T-cell (primary cell): ENCODE measurements at regions of chr7 and their contacts with region 1.

Region 1: GRCh38 chr7:152383341-152384234 is 52.2 kb downstream of the KMT2C start:
- DNase-seq: no peak
- ATAC-seq: peak in 1 of 4 experiments; percentile 15
- H3K4me3 ChIP-seq: no peak overlapping the region
- H3K4me3 Mint-ChIP-seq: no peak overlapping the region
- H3K27ac ChIP-seq: no peak overlapping the region
- H3K27ac Mint-ChIP-seq: no peak overlapping the region
- H3K4me1 ChIP-seq: peaks cover 2% of the 10 kb centered on the region in 2 experiments
- H3K4me1 Mint-ChIP-seq: peaks cover 35 to 42% (median 38%) of the 10 kb centered on the region in 3 donors
- H3K27me3 ChIP-seq: no peaks in the 10 kb centered on the region
- H3K27me3 Mint-ChIP-seq: no peaks in the 10 kb centered on the region

Region 2: DNA sequence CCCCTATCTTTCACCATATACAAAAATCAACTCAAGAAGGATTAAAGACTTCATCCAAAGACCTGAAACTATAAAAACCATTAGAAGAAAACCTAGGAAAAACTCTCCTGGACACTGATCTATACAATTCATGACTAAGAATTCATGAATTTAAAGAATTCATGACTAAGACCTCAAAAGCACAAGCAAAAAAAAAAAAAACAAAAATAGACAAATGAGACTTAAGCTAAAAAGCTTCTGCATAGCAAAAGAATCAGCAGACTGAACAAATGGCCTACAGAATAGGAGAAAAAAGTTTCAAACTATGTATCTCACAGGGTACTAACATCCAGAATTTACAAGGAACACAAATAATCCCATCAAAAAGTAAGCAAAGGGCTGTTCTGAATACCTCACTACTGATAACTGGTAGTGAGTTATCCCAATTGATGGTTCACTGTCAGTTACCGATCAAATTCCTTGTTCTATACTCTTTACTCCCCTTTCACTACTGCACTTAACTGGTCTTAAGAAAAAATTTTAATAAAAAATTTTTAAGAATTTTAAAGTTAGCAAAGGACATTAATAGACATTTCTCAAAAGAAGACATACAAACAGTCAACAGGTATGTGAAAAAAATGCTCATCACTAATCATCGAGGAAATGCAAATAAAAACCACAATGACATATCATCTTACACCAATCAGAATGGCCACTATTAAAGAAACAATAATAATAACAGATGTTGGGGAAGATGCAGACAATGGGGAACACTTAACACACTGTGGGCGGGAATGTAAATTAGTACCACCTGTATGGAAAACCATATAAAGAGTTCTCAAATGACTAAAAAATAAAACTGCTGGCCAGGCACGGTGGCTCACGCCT is 19.0 kb after region 1 on chr7:
- CTCF ChIA-PET with region 1: no interaction called
- POLR2A ChIA-PET with region 1: no interaction called
- DNase-seq: no peak
- ATAC-seq: no peak
- H3K4me3 ChIP-seq: no peak overlapping the region
- H3K4me3 Mint-ChIP-seq: no peak overlapping the region
- H3K27ac ChIP-seq: no peak overlapping the region
- H3K27ac Mint-ChIP-seq: no peak overlapping the region
- H3K4me1 ChIP-seq: peaks cover 0 to 9% of the 10 kb centered on the region in 2 experiments
- H3K4me1 Mint-ChIP-seq: peaks cover 23 to 41% (median 40%) of the 10 kb centered on the region in 3 donors
- H3K27me3 ChIP-seq: no peaks in the 10 kb centered on the region
- H3K27me3 Mint-ChIP-seq: no peaks in the 10 kb centered on the region

Region 3: GRCh38 chr7:152572101-152572500 is 188.5 kb after region 1 on chr7:
- CTCF ChIA-PET with region 1: no interaction called
- POLR2A ChIA-PET with region 1: interaction called in 1 of 2 experiments, 14 read pairs
- DNase-seq: no peak
- ATAC-seq: no peak
- H3K4me3 ChIP-seq: no peak overlapping the region
- H3K4me3 Mint-ChIP-seq: no peak overlapping the region
- H3K27ac ChIP-seq: no peak overlapping the region
- H3K27ac Mint-ChIP-seq: no peak overlapping the region
- H3K4me1 ChIP-seq: no peaks in the 10 kb centered on the region
- H3K4me1 Mint-ChIP-seq: no peaks in the 10 kb centered on the region
- H3K27me3 ChIP-seq: peaks cover 0 to 9% of the 10 kb centered on the region in 2 experiments
- H3K27me3 Mint-ChIP-seq: peaks cover 0 to 1% of the 10 kb centered on the region in 2 donors